Naive thymus-derived CD4-positive, alpha-beta T cell (primary cell): ENCODE measurements at regions of chr10 and their contacts with region 1.

Region 1: DNA sequence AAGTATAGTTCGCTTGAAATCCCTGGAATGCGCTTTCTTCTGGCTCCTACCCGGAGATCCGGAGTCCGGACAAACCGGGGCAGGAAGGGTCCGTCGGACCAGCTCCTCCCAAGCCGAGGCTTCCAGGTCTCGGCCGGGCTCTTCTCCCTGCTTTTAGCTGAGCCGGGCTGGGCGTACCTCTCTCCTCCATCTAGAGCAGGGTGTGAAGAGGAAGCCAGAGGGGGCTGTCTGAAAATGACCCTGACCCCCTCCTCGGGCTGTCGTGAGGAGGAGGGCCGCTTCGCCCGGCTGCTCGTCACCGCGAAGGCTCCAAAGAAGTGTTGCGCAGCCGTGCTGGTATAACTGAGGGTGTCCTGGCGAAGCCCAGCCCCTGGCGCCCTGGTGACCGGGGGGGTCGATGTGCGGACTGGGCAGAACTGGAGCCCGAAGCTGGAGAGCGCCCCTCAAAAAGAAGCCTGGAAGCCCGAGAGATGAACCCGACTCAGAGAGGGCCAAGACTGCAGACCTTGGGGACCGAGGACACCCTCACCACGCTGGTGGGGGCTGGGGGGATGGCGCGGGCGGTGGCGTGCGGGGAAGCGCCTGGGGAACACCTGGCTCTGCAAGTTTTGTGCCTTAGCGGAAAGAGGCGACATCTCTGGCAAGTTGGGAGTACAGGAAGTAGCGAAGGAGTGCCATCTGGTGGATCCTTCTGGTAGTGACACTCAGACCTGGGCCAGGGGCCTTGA is 5.7 kb downstream of the KAZALD1 start:
- DNase-seq: peak; percentile 45 to 79 (median 70)
- ATAC-seq: peak; percentile 71
- H3K4me3 ChIP-seq: peak overlapping the region; percentile 86
- H3K4me3 Mint-ChIP-seq: peak overlapping the region; percentile 84 to 94 (median 90)
- H3K27ac ChIP-seq: no peak overlapping the region
- H3K27ac Mint-ChIP-seq: peak overlapping the region in 1 of 9 donors; percentile 36
- H3K4me1 ChIP-seq: peaks cover 5 to 24% of the 10 kb centered on the region in 2 donors
- H3K4me1 Mint-ChIP-seq: peaks cover 5 to 31% (median 17%) of the 10 kb centered on the region in 7 donors
- H3K27me3 ChIP-seq: peaks cover 12 to 26% of the 10 kb centered on the region in 2 donors
- H3K27me3 Mint-ChIP-seq: peaks cover 40 to 58% (median 44%) of the 10 kb centered on the region in 5 donors

Region 2: GRCh38 chr10:100446130-100446761 is 621.3 kb before region 1 on chr10:
- CTCF ChIA-PET with region 1: no interaction called
- POLR2A ChIA-PET with region 1: no interaction called
- intact Hi-C with region 1: no loop called
- DNase-seq: no peak
- ATAC-seq: no peak
- H3K4me3 ChIP-seq: no peak overlapping the region
- H3K4me3 Mint-ChIP-seq: no peak overlapping the region
- H3K27ac ChIP-seq: no peak overlapping the region
- H3K27ac Mint-ChIP-seq: no peak overlapping the region
- H3K4me1 ChIP-seq: no peaks in the 10 kb centered on the region
- H3K4me1 Mint-ChIP-seq: no peaks in the 10 kb centered on the region
- H3K27me3 ChIP-seq: no peaks in the 10 kb centered on the region
- H3K27me3 Mint-ChIP-seq: no peaks in the 10 kb centered on the region

Region 3: GRCh38 chr10:100982951-100983830 is 84.3 kb before region 1 on chr10:
- CTCF ChIA-PET with region 1: no interaction called
- POLR2A ChIA-PET with region 1: no interaction called
- intact Hi-C with region 1: no loop called
- DNase-seq: peak in 1 of 9 donors; percentile 1
- ATAC-seq: no peak
- H3K4me3 ChIP-seq: no peak overlapping the region
- H3K4me3 Mint-ChIP-seq: peak overlapping the region in 2 of 10 donors; percentile 19 to 38
- H3K27ac ChIP-seq: no peak overlapping the region
- H3K27ac Mint-ChIP-seq: peak overlapping the region in 2 of 9 donors; percentile 62 to 71
- H3K4me1 ChIP-seq: peaks cover 13 to 16% of the 10 kb centered on the region in 2 donors
- H3K4me1 Mint-ChIP-seq: peaks cover 19 to 34% (median 29%) of the 10 kb centered on the region in 7 donors
- H3K27me3 ChIP-seq: no peaks in the 10 kb centered on the region
- H3K27me3 Mint-ChIP-seq: no peaks in the 10 kb centered on the region

Region 4: GRCh38 chr10:101007099-101007711 is 60.3 kb before region 1 on chr10:
- CTCF ChIA-PET with region 1: no interaction called
- POLR2A ChIA-PET with region 1: no interaction called
- intact Hi-C with region 1: no loop called
- DNase-seq: no peak
- ATAC-seq: no peak
- H3K4me3 ChIP-seq: no peak overlapping the region
- H3K4me3 Mint-ChIP-seq: no peak overlapping the region
- H3K27ac ChIP-seq: no peak overlapping the region
- H3K27ac Mint-ChIP-seq: no peak overlapping the region
- H3K4me1 ChIP-seq: no peaks in the 10 kb centered on the region
- H3K4me1 Mint-ChIP-seq: no peaks in the 10 kb centered on the region
- H3K27me3 ChIP-seq: no peaks in the 10 kb centered on the region
- H3K27me3 Mint-ChIP-seq: no peaks in the 10 kb centered on the region

Region 5: DNA sequence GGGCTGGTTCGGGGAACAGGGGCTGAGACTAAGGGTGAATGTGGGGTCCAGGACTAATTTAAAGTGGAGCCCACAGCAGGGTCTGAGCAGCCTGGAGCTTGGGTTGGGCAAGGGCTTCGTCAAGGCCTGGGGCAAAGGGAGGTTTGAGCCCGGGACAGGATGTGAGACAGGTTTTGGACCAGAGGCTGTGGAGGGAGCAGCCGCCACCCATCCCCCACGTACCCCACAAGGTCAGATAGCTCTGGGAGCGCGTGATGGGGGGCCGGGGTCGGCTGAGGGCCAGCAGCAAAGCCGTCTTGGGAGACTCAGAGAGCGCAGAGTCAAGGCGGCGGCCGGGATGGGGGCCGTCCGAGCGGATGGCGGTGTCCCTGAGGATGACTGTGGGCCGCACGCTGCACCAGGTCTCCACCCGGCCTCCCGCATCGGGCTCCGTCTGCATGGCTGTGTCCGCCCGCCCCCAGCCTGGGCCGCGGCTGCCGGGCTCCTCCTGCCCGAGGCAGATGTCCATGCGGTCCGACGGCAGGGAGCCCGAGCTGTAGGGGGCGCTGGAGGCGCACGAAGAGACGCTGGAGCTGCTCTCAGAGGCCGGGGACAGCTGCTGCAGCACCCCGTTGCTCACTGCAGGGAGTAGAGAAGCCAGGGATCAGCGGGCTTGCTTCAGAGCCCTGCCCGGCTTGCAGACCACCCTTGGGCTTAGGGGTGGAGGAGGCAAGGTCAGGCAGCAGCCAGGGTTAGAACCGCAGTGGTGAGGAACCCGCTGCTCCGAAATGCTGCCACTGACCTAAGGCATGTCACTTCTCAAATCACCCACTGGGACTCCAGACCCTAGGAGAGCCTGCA is 48.7 kb before region 1 on chr10:
- CTCF ChIA-PET with region 1: interaction called, 4 read pairs
- POLR2A ChIA-PET with region 1: no interaction called
- intact Hi-C with region 1: loop called (anchors 1 kb)
- DNase-seq: peak in 8 of 9 donors; percentile 45 to 86 (median 56)
- ATAC-seq: peak; percentile 80
- H3K4me3 ChIP-seq: no peak overlapping the region
- H3K4me3 Mint-ChIP-seq: no peak overlapping the region
- H3K27ac ChIP-seq: no peak overlapping the region
- H3K27ac Mint-ChIP-seq: no peak overlapping the region
- H3K4me1 ChIP-seq: no peaks in the 10 kb centered on the region
- H3K4me1 Mint-ChIP-seq: peaks cover 0 to 20% (median 10%) of the 10 kb centered on the region in 7 donors
- H3K27me3 ChIP-seq: peaks cover 0 to 2% of the 10 kb centered on the region in 2 donors
- H3K27me3 Mint-ChIP-seq: peaks cover 47 to 53% (median 52%) of the 10 kb centered on the region in 5 donors

Region 6: DNA sequence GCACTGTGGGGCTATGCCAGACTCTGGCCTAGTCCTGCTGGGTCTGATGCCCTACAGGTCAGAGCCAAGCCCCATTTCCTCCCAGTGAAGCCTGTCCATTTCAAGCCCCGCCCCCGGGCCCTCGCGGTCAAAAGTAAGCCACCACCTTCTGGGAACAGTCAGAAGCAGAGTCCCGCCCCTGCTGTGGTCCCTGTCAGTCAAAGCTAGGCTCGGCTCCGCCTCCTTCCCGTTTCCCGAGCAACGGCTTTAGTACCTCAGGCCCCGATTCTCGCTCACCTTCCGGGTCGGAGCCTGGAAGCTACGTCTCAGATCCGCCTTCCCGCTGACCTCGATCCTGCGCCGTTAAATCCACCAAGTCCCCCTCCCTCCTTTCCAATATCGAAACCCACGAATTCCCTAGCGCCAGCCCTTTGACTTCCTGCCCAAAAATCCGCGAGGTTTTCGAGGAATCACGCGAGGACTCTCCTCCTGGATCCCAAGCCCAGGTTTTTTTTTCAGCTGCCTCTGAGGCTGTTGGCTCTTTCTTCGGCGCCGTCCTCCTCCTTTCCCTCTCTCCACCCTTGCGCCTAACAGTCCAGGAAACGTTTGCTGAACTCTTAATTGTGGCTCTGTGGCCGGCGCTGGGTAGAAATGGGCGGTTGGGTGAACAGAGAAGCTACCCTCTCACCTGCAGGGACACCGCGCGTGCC is 24.7 kb before region 1 on chr10:
- CTCF ChIA-PET with region 1: interaction called, 100 read pairs
- POLR2A ChIA-PET with region 1: interaction called, 4 read pairs
- intact Hi-C with region 1: loop called (anchors 1 kb)
- DNase-seq: peak; percentile 49 to 86 (median 57)
- ATAC-seq: peak; percentile 87
- H3K4me3 ChIP-seq: peak overlapping the region; percentile 82
- H3K4me3 Mint-ChIP-seq: peak overlapping the region; percentile 86 to 99 (median 94)
- H3K27ac ChIP-seq: peak overlapping the region; percentile 67
- H3K27ac Mint-ChIP-seq: peak overlapping the region; percentile 81 to 96 (median 88)
- H3K4me1 ChIP-seq: peaks cover 5 to 14% of the 10 kb centered on the region in 2 donors
- H3K4me1 Mint-ChIP-seq: peaks cover 20 to 27% (median 24%) of the 10 kb centered on the region in 7 donors
- H3K27me3 ChIP-seq: no peaks in the 10 kb centered on the region
- H3K27me3 Mint-ChIP-seq: peaks cover 10 to 44% (median 21%) of the 10 kb centered on the region in 5 donors

Region 7: GRCh38 chr10:101050208-101051069 is 17.1 kb before region 1 on chr10:
- CTCF ChIA-PET with region 1: interaction called, 100 read pairs
- POLR2A ChIA-PET with region 1: no interaction called
- intact Hi-C with region 1: loop called in 1 of 2 experiments (anchors 1 kb)
- DNase-seq: peak; percentile 60 to 88 (median 74)
- ATAC-seq: peak; percentile 93
- H3K4me3 ChIP-seq: no peak overlapping the region
- H3K4me3 Mint-ChIP-seq: peak overlapping the region in 7 of 10 donors; percentile 10 to 63 (median 55)
- H3K27ac ChIP-seq: no peak overlapping the region
- H3K27ac Mint-ChIP-seq: no peak overlapping the region
- H3K4me1 ChIP-seq: peaks cover 5 to 9% of the 10 kb centered on the region in 2 donors
- H3K4me1 Mint-ChIP-seq: peaks cover 13 to 30% (median 15%) of the 10 kb centered on the region in 7 donors
- H3K27me3 ChIP-seq: peaks cover 7 to 8% of the 10 kb centered on the region in 2 donors
- H3K27me3 Mint-ChIP-seq: peaks cover 38 to 54% (median 49%) of the 10 kb centered on the region in 5 donors

Region 8: DNA sequence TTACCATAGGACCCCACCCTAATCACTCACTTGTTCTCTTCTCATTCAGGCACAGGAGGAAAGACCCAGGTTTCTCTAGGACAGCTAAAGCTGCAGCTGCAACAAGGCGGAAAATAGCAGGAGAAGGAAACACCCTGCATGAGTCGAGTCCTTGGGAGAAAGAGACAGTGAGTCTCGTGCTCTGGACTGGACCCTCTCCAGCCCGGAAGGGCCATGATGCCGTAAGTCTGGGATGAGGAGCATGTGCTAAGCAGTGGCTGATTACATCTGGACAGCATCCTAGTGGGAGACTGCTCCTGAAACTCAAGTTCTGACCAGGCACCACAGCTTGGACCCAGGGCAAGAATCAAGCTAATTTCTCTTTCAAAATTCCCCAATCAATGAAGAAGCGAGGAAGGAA is 588.0 kb after region 1 on chr10:
- CTCF ChIA-PET with region 1: no interaction called
- POLR2A ChIA-PET with region 1: no interaction called
- intact Hi-C with region 1: no loop called
- DNase-seq: no peak
- ATAC-seq: no peak
- H3K4me3 ChIP-seq: no peak overlapping the region
- H3K4me3 Mint-ChIP-seq: no peak overlapping the region
- H3K27ac ChIP-seq: no peak overlapping the region
- H3K27ac Mint-ChIP-seq: peak overlapping the region in 1 of 9 donors; percentile 36
- H3K4me1 ChIP-seq: no peaks in the 10 kb centered on the region
- H3K4me1 Mint-ChIP-seq: peaks cover 0 to 11% (median 5%) of the 10 kb centered on the region in 7 donors
- H3K27me3 ChIP-seq: no peaks in the 10 kb centered on the region
- H3K27me3 Mint-ChIP-seq: no peaks in the 10 kb centered on the region